Gastrocnemius medialis (tissue), 4 donors: ENCODE measurements at regions of chr2 and their contacts with region 1.

Region 1: DNA sequence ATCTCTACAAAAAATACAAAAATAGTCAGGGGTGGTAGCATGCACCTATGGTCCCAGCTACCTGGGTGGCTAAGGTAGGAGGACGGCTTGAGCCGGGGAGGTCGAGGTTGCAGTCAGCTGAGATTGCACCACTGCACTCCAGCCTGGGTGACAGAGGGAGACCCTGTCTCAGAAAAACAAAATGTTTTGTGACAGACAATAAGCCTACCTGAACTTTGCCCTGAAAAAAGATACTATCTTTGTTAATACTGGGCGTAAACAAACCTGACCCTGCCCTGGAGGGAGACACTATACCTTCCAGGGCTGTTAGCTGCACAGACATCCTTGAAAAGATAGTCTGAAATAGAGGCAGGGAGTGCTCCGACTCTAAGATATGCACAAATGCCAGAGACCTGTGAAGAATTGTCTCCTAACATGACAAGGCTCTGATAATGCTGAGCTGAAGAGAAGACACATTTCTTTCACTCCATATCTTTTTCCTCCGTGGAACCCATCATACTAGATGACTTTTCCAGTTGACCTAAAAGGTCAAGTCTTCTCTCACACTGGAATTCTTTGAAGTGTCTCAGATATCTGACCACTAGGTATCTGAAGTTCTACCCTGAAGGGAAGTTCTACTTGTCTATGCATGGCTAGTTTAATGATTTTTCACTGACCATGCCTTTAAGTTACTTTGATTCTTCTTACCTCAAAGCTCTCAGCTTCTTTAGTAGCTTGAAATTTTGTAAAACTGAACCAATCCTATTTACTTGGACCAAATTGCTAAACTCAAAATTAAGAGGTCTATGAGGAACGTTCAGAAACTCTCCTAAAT is 20.9 kb upstream of the HK2 start:
- DNase-seq: no peak
- ATAC-seq: no peak
- H3K4me3 ChIP-seq: no peak overlapping the region
- H3K27ac ChIP-seq: no peak overlapping the region
- H3K4me1 ChIP-seq: no peaks in the 10 kb centered on the region
- H3K27me3 ChIP-seq: no peaks in the 10 kb centered on the region
- CTCF ChIP-seq: no peak
- POLR2A ChIP-seq: no peak

Region 2: GRCh38 chr2:74724496-74724895 is 88.5 kb before region 1 on chr2:
- in situ Hi-C with region 1: no loop called
- intact Hi-C with region 1: loop called (anchors 5 kb)
- DNase-seq: no peak
- ATAC-seq: no peak
- H3K4me3 ChIP-seq: no peak overlapping the region
- H3K27ac ChIP-seq: no peak overlapping the region
- H3K4me1 ChIP-seq: no peaks in the 10 kb centered on the region
- H3K27me3 ChIP-seq: no peaks in the 10 kb centered on the region
- CTCF ChIP-seq: no peak
- POLR2A ChIP-seq: no peak